Sciatic nerve (tissue), 2 donors: ENCODE measurements at regions of chr2 and their contacts with region 1.

Region 1: GRCh38 chr2:175585496-175585895 is 404.0 kb upstream of the ATP5MC3 start:
- DNase-seq: no peak
- ATAC-seq: no peak

Region 2: GRCh38 chr2:174312581-174313234 is 1272.8 kb before region 1 on chr2:
- intact Hi-C with region 1: loop called (anchors 5 kb)
- DNase-seq: no peak
- ATAC-seq: no peak

Region 3: DNA sequence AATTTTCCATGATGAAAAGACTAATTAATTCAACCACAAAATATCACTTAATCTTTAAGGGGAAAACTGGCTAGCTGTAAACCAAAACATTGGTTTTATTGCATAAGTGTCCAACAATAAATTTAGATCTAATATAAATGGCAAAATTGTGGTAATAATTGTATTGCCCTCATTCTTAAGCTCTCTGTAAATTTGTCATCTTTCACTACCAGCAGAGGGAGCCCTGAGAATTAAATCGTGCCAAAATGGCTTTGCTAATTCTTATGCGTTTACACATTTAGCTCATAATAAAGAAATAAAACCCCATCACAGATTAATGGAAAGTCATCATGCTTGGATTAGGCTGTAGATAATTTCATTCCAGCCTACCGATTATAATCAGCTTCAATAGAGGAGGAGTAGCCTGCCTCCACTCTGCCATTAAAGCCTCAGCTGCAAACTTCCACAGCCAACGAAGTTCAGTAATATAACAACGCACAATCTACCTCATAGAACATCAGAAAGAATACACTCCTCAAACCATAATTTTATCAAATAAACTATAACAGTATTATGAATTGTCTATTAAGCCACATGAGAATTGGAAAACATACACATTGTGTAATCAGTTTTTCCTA is 334.0 kb before region 1 on chr2:
- intact Hi-C with region 1: no loop called
- DNase-seq: no peak
- ATAC-seq: no peak

Region 4: GRCh38 chr2:175567435-175568061 is 17.9 kb before region 1 on chr2:
- intact Hi-C with region 1: no loop called
- DNase-seq: no peak
- ATAC-seq: no peak

Region 5: DNA sequence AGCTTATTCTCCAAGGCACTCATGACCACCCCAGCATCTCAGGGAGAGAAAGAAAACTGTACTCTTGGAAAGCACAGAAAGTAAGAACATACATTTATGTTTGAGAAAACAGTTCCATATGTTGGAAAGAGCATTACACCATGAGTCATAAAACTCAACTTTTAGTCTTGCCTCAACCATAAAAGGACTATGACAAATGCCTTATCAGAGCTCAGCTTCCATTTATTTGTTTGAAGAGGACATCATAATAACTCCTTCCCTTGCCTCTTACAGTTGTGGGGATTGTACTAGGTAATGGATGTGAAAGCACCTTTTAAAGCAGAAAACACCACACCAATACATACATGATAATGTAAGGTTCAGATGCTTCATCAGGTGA is 45.7 kb after region 1 on chr2:
- intact Hi-C with region 1: no loop called
- DNase-seq: no peak
- ATAC-seq: no peak

Region 6: DNA sequence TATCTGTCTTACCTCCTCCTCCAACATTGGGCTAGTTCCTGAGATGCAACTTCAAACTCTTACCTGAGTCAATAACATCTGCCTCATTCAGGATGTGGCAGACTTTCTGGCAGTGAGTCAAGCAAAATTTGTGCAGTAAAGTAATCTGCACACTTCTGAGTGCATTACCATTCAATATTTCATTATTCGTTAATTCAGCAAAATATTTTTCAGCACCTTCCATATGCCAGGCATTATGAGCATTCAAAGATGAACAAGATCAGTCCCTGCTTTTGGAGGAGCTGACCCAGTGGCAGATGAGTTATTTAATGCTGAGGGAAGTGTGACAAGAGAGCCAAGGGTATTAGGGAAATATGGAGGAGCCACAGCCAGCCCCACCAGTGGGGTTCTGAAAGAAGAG is 76.8 kb after region 1 on chr2:
- intact Hi-C with region 1: no loop called
- DNase-seq: no peak
- ATAC-seq: no peak